Spleen (tissue), 13 donors: ENCODE measurements at regions of chr10 and their contacts with region 1.

Region 1: GRCh38 chr10:97914837-97915211 is 65.2 kb downstream of the GOLGA7B start:
- DNase-seq: peak; percentile 86
- H3K4me3 ChIP-seq: peak overlapping the region in 1 of 8 donors; percentile 27
- H3K27ac ChIP-seq: no peak overlapping the region
- H3K4me1 ChIP-seq: peaks cover 0 to 7% (median 6%) of the 10 kb centered on the region in 6 donors
- H3K27me3 ChIP-seq: peaks cover 0 to 72% (median 0%) of the 10 kb centered on the region in 7 donors
- CTCF ChIP-seq: peak; percentile 14 to 90 (median 83)
- POLR2A ChIP-seq: no peak

Region 2: DNA sequence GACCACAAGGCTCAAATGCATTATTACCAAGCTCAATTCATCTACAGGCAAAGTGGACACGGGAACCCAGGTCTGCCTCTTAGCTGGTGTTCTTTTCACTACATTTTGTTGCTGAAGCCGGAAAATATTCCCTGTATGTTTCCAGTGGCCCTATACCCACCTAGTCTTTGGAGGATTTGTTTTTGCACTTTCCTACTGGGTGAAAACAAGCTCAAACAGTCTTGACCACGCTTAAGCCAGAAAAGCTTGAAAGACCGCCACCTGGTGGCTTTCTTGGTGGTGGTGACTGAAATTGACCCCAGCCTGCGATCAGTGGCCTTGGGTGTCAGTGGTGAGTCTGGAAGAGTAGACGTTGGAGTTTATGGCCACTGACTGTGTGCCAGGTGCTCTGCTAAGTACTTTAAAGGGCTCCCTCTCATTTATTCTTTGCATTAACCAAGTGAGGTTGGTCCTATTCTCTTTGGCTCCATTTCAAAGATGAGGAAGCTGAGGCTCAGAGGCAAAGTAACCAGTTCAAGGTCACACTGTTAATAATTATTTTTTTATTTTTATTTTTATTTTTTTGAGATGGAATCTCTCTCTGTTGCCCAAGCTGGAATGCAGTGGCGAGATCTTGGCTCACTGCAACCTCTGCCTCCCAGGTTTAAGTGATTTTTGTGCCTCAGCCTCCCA is 126.7 kb after region 1 on chr10:
- intact Hi-C with region 1: loop called (anchors 5 kb)
- DNase-seq: no peak
- H3K4me3 ChIP-seq: no peak overlapping the region
- H3K27ac ChIP-seq: no peak overlapping the region
- H3K4me1 ChIP-seq: no peaks in the 10 kb centered on the region
- H3K27me3 ChIP-seq: peaks cover 0 to 91% (median 25%) of the 10 kb centered on the region in 7 donors
- CTCF ChIP-seq: peak; percentile 21 to 70 (median 49)
- POLR2A ChIP-seq: no peak

Region 3: DNA sequence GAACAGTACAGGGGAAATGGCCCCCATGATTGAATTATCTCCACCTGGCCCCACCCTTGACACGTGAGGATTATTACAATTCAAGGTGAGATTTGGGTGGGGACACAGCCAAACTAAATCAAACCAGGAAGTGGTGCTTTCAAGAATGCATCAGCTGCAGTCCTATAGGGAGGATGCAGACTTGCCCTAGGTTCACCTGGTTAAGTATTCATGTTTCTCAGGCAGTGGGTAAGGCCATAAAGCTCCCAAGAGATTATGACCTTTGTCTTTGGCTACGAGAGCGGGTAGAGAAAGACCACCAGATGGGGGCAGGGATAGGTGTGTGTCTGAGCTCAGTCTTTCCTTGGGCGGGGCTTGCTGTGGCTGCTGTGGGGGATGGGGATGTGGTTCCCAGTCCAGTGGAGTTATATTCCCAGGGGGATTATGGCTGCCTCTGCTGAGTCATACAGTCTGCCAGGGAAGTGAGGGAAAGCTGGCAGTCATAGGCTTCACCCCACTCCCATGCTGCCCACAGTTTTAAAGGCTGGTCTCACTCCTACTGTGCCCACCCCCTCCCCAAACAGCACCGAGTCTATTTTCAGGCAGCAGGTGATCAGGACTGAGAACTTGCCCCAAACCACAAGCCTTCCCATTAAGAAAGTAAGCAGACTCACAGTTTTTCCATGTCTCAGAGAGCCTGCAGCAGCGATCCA is 211.3 kb after region 1 on chr10:
- intact Hi-C with region 1: no loop called
- DNase-seq: no peak
- H3K4me3 ChIP-seq: no peak overlapping the region
- H3K27ac ChIP-seq: no peak overlapping the region
- H3K4me1 ChIP-seq: no peaks in the 10 kb centered on the region
- H3K27me3 ChIP-seq: peaks cover 0 to 23% (median 0%) of the 10 kb centered on the region in 7 donors
- CTCF ChIP-seq: no peak
- POLR2A ChIP-seq: no peak